ENCODE measurements at regions of chr11 and their contacts with region 1.

Region 1: DNA sequence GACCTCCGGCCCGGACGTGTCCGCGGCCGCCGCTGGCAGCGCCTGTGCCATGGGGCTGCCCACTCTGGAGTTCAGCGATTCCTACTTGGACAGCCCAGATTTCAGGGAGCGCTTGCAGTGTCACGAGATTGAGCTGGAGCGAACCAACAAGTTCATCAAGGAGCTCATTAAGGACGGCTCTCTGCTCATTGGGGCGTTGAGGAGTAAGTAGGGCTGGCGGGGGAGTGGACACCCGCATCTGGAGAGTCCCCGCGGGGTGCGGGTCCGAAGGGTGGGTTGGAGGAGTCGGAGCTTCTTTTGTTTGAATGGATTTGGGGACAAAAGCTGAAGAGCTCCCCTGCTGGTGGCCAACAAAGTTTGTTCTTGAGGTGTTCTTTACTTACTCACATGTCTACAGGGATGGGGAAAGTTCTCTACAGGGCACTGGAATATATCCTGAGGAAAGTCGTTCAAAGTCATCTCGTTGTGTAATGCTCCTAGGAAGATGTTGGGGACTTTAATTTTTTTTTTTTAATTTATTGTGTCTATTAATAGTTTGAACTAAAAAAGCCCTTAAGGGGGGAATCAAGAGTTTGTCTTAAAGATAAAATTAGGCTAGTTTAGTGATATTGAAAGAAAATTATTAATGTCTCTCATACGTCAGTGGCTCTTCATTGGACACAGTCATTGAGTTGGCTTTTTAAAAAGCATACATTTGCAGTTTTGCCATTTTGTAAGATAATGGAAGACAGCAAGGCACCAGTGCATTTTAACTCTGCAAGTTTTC is 725 bp downstream of the ARHGAP42 start:
- DNase-seq: peak; percentile 81
- H3K4me3 Mint-ChIP-seq: peak overlapping the region; percentile 97
- H3K27ac Mint-ChIP-seq: peak overlapping the region; percentile 57
- H3K4me1 Mint-ChIP-seq: peaks cover 18% of the 10 kb centered on the region
- H3K27me3 Mint-ChIP-seq: no peaks in the 10 kb centered on the region
- CTCF ChIP-seq: peak; percentile 50

Region 2: GRCh38 chr11:100703139-100703538 is 15.3 kb after region 1 on chr11:
- CTCF ChIA-PET with region 1: interaction called, 10 read pairs
- POLR2A ChIA-PET with region 1: interaction called, 3 read pairs
- intact Hi-C with region 1: no loop called
- DNase-seq: no peak
- H3K4me3 Mint-ChIP-seq: no peak overlapping the region
- H3K27ac Mint-ChIP-seq: no peak overlapping the region
- H3K4me1 Mint-ChIP-seq: peaks cover 5% of the 10 kb centered on the region
- H3K27me3 Mint-ChIP-seq: no peaks in the 10 kb centered on the region
- CTCF ChIP-seq: no peak

Region 3: GRCh38 chr11:100776212-100776896 is 88.5 kb after region 1 on chr11:
- CTCF ChIA-PET with region 1: interaction called, 4 read pairs
- POLR2A ChIA-PET with region 1: interaction called, 6 read pairs
- intact Hi-C with region 1: loop called (anchors 5 kb)
- DNase-seq: peak; percentile 57
- H3K4me3 Mint-ChIP-seq: no peak overlapping the region
- H3K27ac Mint-ChIP-seq: peak overlapping the region; percentile 91
- H3K4me1 Mint-ChIP-seq: peaks cover 20% of the 10 kb centered on the region
- H3K27me3 Mint-ChIP-seq: no peaks in the 10 kb centered on the region
- CTCF ChIP-seq: no peak

Measured in MCF 10A (cell line).